RWPE1 (cell line): ENCODE measurements at regions of chr3 and their contacts with region 1.

Region 1: DNA sequence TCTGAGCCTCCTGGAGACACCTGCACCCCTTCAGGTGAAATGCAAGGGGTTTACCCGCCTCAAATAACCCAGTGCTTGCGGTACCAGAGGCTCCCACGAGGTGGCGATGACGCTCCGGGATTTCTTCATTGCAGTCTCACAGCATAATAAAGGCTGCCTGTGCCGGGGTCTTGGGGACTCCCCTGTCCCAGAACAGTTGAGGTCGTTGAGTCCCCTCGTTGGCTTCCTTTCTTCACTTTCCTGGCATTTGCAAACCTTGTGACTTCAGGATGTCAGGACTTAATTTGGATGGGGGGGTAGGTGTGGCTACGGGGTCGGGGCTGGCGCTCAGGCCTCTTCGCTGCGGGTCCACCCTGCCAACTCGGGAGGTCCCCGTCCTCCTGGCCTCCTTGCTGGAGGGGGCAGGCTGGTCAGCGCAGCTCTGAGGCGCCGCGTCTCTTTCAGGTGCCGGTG is 1.3 kb downstream of the GNAT1 start:
- DNase-seq: peak; percentile 63
- H3K27ac ChIP-seq: no peak overlapping the region
- CTCF ChIP-seq: peak; percentile 92

Region 2: DNA sequence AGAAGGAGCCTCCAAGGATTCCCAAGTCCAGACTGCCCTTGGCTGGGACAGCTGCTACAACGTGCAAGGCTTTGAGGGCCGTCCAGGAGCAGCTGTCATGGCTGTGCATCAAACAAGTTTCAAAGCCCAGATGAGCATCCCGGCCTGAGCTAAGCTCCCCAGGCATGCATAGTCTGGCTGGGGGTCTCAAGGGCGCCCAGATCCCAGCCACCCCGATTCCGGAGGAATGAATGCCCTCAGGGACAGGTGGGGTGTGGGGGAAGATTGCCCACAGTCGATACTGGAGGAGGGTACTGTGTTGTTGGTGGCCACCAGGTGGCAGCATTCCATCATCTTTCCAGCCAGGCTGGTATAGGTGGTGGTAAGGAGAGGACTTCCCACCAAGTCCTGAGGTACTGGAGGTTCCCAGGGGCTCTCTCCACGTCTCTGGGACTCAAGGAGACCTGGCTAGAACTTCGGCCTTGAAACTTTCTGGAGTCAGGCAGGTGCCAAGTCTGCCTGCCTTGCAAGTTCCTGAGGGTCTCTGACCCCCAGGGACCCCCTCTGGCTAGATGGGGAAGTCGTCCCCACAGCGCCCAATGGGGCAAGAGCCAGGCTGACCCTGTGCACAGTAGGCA is 71.2 kb before region 1 on chr3:
- CTCF ChIA-PET with region 1: interaction called, 18 read pairs
- POLR2A ChIA-PET with region 1: no interaction called
- DNase-seq: peak; percentile 85
- H3K27ac ChIP-seq: peak overlapping the region; percentile 69
- CTCF ChIP-seq: peak; percentile 75

Region 3: GRCh38 chr3:50136714-50137405 is 55.9 kb before region 1 on chr3:
- CTCF ChIA-PET with region 1: no interaction called
- POLR2A ChIA-PET with region 1: no interaction called
- DNase-seq: no peak
- H3K27ac ChIP-seq: peak overlapping the region; percentile 85
- CTCF ChIP-seq: no peak

Region 4: DNA sequence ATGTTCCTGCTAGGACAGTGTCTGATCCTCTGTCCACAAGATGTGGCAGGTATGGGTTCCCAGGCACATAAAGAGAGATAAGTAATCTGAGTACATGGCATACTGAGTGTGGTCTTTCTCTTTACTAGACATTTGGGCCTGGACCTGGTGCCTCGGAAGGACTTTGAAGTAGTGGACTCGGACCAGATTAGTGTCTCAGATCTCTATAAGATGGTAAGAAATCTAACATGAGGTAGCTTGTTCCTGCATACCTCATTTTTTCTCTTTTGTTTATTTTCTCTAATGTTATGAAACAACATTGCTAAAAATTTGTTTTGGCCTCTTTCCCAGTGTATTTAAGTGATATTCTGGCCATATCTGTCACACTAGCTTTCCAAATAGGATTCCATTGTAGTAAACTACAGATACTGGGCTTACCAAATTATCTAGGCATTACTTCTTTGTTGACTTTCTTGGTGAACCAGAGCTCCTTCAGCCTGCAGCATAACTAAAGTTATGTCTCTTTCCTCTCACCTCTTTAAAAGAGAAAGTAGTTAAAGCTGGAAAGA is 882.6 kb after region 1 on chr3:
- CTCF ChIA-PET with region 1: no interaction called
- POLR2A ChIA-PET with region 1: no interaction called
- DNase-seq: no peak
- H3K27ac ChIP-seq: no peak overlapping the region
- CTCF ChIP-seq: no peak